ENCODE measurements at regions of chr6 and their contacts with region 1.

Region 1: DNA sequence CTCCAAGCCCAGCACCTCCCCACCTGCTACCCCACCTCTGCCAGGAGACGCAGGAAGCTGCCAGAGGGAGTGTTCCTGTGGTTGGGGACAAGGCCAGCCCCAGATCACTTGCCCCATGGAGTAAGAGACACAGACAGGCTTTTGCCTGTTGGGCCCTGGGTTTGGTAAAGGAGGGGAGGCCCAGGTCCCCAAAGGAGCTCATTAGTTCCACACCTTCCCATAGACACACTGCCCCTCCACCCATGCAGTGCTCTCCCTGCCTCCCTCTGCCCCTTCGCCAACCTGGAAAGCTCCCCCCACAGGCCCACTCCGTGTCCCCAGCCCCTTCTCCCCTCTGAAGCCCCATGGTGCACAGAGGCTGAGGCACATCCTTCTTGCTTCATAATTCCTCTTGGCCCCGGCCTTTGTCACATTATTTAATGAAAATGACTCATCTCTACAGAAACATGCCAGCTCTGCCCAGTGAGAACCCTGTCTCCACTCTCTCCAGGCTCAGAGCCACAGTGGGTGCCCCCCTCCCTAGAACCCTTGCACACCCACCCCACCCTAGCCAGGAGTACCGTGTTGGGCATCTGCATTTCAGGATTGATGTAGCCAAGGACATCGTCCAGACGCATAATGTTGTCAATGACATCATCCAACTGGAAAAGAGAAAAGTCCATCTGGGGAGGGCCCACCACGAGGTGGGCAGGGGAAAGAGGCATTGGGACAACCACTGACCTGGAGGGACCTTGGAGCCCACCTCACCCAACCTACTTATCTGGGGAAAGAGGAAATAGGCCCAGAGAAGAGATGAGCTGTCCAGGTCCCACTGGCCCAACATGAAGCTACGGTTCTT is 46.0 kb downstream of the TFEB start:
- DNase-seq: no peak
- H3K4me3 ChIP-seq: no peak overlapping the region
- H3K27ac ChIP-seq: no peak overlapping the region
- H3K4me1 ChIP-seq: peaks cover 0 to 3% (median 3%) of the 10 kb centered on the region in 4 donors
- H3K27me3 ChIP-seq: no peaks in the 10 kb centered on the region
- CTCF ChIP-seq: no peak
- EP300 ChIP-seq: no peak
- POLR2A ChIP-seq: no peak

Region 2: GRCh38 chr6:41602864-41603608 is 86.4 kb before region 1 on chr6:
- in situ Hi-C with region 1: loop called in 2 of 4 experiments (anchors 5 to 10 kb)
- intact Hi-C with region 1: no loop called
- DNase-seq: peak; percentile 84
- H3K4me3 ChIP-seq: peak overlapping the region in 1 of 4 donors; percentile 25
- H3K27ac ChIP-seq: peak overlapping the region in 3 of 4 donors; percentile 49 to 75 (median 60)
- H3K4me1 ChIP-seq: peaks cover 16 to 20% (median 18%) of the 10 kb centered on the region in 4 donors
- H3K27me3 ChIP-seq: no peaks in the 10 kb centered on the region
- CTCF ChIP-seq: peak; percentile 86 to 92 (median 88)
- EP300 ChIP-seq: no peak
- POLR2A ChIP-seq: no peak

Region 3: GRCh38 chr6:41608443-41609151 is 80.8 kb before region 1 on chr6:
- in situ Hi-C with region 1: loop called in 2 of 4 experiments (anchors 5 to 10 kb)
- intact Hi-C with region 1: loop called (anchors 1 kb)
- DNase-seq: no peak
- H3K4me3 ChIP-seq: no peak overlapping the region
- H3K27ac ChIP-seq: no peak overlapping the region
- H3K4me1 ChIP-seq: no peaks in the 10 kb centered on the region
- H3K27me3 ChIP-seq: no peaks in the 10 kb centered on the region
- CTCF ChIP-seq: no peak
- EP300 ChIP-seq: no peak
- POLR2A ChIP-seq: no peak

Region 4: GRCh38 chr6:42555477-42556457 is 866.4 kb after region 1 on chr6:
- in situ Hi-C with region 1: no loop called
- intact Hi-C with region 1: no loop called
- DNase-seq: peak; percentile 81
- H3K4me3 ChIP-seq: no peak overlapping the region
- H3K27ac ChIP-seq: peak overlapping the region; percentile 88 to 91 (median 88)
- H3K4me1 ChIP-seq: peaks cover 4 to 24% (median 11%) of the 10 kb centered on the region in 4 donors
- H3K27me3 ChIP-seq: no peaks in the 10 kb centered on the region
- CTCF ChIP-seq: no peak
- EP300 ChIP-seq: no peak
- POLR2A ChIP-seq: peak; percentile 88

Measured in transverse colon (tissue), 4 donors.